Adrenal gland (tissue), 19 donors: ENCODE measurements at regions of chr14 and their contacts with region 1.

Region 1: DNA sequence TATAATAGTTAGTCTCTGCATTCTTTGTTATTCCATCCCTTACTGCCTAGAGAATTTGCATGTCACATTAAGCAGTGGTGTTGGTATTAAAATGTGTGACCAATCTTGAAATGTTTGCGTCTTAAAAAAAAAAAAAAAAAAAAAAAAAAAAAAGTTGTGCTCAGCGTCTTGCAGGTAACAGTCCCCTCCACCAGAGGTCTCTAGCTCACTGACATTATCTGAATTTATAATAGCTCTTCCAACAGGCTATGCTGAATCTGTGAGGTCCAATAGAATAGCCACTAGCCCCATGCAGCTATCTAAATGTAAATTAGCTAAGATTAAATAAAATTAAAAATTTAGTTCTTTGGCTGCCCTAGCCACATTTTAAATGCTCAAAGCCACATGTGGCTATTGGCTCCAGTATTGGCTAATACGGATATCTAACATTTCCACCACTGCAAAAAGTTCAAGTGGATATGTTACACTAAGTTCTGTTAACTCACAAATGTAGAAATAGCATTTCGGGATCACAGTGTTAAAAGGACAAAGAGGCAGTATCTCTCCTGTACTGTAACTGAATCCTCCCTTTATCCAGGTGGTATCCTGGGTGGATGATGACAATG is 28.7 kb downstream of the NKX2-8 start:
- DNase-seq: peak in 3 of 7 donors; percentile 14 to 48 (median 36)
- H3K4me3 ChIP-seq: no peak overlapping the region
- H3K27ac ChIP-seq: no peak overlapping the region
- H3K4me1 ChIP-seq: no peaks in the 10 kb centered on the region
- H3K27me3 ChIP-seq: peaks cover 16% of the 10 kb centered on the region
- CTCF ChIP-seq: peak; percentile 9 to 71 (median 54)
- POLR2A ChIP-seq: no peak

Region 2: DNA sequence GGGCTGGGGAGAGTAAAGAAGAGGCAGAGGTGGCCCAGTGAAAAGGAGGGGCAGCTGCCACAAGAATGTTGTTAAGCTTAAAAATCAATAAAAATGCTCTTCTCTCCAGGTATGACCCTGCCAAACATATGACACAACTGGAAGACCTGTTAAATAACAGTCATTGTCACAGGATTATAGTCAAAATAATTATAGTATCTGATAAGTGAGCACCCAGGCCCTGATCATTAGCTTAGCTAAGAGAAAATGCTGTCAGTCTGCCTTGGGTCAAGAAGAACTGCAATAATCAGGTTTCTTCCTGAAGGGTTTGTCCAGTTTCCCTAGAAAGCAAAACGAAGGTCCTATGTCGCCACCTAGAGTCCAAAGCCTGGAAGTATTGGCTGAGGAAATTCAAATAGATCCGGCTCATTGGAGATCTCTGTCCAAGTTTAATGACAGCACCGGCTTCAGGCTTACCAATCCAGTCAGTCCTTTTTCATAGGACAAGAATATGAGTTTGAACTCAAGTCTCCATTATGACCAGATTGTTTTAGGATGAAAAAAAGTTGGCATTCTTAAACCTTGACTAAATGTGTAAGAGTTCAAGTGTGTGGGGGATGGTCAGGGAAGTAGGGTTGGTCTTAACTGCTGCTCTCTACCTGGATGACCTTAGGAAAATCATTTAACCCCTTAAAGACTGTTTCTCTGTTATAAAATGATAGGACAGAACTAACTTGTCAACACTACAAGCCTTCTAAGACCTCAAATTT is 51.2 kb after region 1 on chr14:
- intact Hi-C with region 1: loop called (anchors 10 kb)
- DNase-seq: peak; percentile 43 to 82 (median 52)
- H3K4me3 ChIP-seq: no peak overlapping the region
- H3K27ac ChIP-seq: no peak overlapping the region
- H3K4me1 ChIP-seq: no peaks in the 10 kb centered on the region
- H3K27me3 ChIP-seq: no peaks in the 10 kb centered on the region
- CTCF ChIP-seq: peak; percentile 58 to 79 (median 67)
- POLR2A ChIP-seq: no peak

Region 3: DNA sequence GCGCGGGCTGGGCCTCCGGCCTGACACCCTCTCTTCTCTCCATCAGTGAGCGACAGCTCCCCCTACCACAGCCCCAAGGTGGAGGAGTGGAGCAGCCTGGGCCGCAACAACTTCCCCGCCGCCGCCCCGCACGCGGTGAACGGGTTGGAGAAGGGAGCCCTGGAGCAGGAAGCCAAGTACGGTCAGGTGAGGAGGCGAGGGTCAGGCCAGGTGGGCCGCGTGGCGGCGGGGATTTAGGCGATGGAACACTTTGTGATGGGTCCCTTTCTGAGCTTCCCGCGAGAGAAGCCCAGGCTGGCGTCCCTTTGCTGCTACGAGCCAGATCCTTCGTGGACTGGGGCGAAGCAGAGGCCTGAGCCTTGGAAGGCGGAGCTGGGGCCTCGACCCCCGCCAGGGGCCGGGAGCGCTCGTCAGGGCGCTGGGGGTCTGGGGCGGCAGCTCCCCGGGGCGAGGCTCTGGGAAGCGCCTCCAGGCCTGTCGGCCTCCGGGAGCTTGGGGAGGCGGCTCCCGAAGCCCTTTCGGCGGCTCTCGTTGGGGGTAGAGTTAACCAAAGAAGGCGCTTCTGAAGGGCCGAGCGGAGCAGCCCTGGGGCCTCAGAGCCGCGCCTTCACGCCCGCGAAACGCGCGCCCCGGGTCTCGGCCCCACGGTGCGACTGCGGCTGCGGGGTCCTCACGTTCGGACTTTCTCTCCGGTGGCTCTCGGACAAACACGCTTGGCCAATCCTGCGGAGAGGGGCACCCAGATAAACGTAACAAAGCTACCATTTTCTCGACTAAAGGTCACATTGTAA is 112.9 kb after region 1 on chr14:
- intact Hi-C with region 1: no loop called
- DNase-seq: no peak
- H3K4me3 ChIP-seq: no peak overlapping the region
- H3K27ac ChIP-seq: no peak overlapping the region
- H3K4me1 ChIP-seq: peaks cover 12 to 31% of the 10 kb centered on the region in 2 donors
- H3K27me3 ChIP-seq: peaks cover 90% of the 10 kb centered on the region
- CTCF ChIP-seq: no peak
- POLR2A ChIP-seq: no peak